ENCODE measurements at regions of chr5 and their contacts with region 1.

Region 1: GRCh38 chr5:92977846-92978540 is 603.0 kb downstream of the NR2F1-AS1 start:
- DNase-seq: no peak
- ATAC-seq: no peak
- H3K4me3 Mint-ChIP-seq: no peak overlapping the region
- H3K27ac Mint-ChIP-seq: no peak overlapping the region
- H3K4me1 Mint-ChIP-seq: no peaks in the 10 kb centered on the region
- H3K27me3 Mint-ChIP-seq: no peaks in the 10 kb centered on the region

Region 2: DNA sequence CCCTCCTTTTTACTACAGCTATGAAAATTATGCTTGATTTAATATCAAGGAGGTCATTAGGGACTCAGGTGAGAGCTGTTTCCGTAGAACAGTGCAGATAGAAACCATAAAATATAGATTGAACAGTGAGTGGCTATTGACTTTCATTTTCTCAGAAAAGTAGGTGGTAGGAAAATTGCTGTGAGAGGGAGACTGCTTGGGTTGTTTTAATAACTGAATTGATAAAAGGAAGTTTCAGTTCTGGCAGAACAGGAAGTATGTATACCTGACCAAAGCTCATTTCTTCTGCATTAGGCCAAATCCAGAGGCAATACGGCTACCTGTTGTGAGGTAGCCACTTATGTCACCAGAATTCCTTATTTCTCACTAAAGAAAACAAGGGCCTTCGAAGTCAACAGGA is 833.2 kb before region 1 on chr5:
- CTCF ChIA-PET with region 1: no interaction called
- POLR2A ChIA-PET with region 1: no interaction called
- intact Hi-C with region 1: loop called in 1 of 2 experiments (anchors 5 kb)
- DNase-seq: no peak
- ATAC-seq: no peak
- H3K4me3 Mint-ChIP-seq: no peak overlapping the region
- H3K27ac Mint-ChIP-seq: no peak overlapping the region
- H3K4me1 Mint-ChIP-seq: no peaks in the 10 kb centered on the region
- H3K27me3 Mint-ChIP-seq: no peaks in the 10 kb centered on the region

Measured in activated CD4-positive, alpha-beta T cell treated with anti-CD3 and anti-CD28 coated beads for 36 hours (primary cell).